Activated CD8-positive, alpha-beta T cell treated with anti-CD3 and anti-CD28 coated beads for 36 hours (primary cell): ENCODE measurements at regions of chr20 and their contacts with region 1.

Region 1: DNA sequence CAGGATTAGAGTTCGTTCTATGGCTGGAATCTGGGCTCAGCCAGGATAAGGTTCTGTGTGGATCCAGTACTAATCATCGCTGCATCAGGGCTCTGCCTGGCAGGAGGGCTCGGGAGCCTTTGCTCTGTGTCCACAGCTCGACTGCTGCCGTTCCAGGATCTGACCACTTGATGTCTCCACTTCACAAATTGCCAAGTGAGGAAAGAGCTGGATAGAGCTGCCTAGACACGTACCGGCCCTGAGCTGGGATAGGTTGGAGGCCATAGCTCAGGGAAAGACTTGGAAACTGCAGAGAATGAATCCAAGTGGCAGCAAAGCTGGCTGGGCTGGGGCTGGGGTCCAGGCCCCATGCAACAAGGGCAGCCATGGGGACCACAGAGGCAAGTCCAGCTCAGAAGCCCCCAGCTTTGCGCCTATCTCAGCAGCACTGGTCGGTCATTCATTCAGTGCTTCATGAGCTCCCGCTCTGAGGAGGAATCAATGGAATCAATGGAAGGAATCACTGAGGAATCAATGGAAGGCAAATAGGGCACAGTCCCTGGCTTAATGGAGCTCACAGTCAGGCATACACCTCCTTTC is 38.0 kb upstream of the TOP1 start:
- DNase-seq: peak; percentile 86
- ATAC-seq: peak; percentile 93
- H3K4me3 Mint-ChIP-seq: no peak overlapping the region
- H3K27ac Mint-ChIP-seq: peak overlapping the region; percentile 85
- H3K4me1 Mint-ChIP-seq: peaks cover 28% of the 10 kb centered on the region
- H3K27me3 Mint-ChIP-seq: no peaks in the 10 kb centered on the region
- CTCF ChIP-seq: peak; percentile 87

Region 2: GRCh38 chr20:40945754-40946450 is 44.7 kb before region 1 on chr20:
- CTCF ChIA-PET with region 1: no interaction called
- POLR2A ChIA-PET with region 1: no interaction called
- intact Hi-C with region 1: no loop called
- DNase-seq: peak; percentile 28
- ATAC-seq: no peak
- H3K4me3 Mint-ChIP-seq: no peak overlapping the region
- H3K27ac Mint-ChIP-seq: no peak overlapping the region
- H3K4me1 Mint-ChIP-seq: no peaks in the 10 kb centered on the region
- H3K27me3 Mint-ChIP-seq: no peaks in the 10 kb centered on the region
- CTCF ChIP-seq: no peak

Region 3: GRCh38 chr20:40962730-40963504 is 27.7 kb before region 1 on chr20:
- CTCF ChIA-PET with region 1: interaction called, 59 read pairs
- POLR2A ChIA-PET with region 1: no interaction called
- intact Hi-C with region 1: no loop called
- DNase-seq: peak; percentile 78
- ATAC-seq: peak; percentile 89
- H3K4me3 Mint-ChIP-seq: no peak overlapping the region
- H3K27ac Mint-ChIP-seq: no peak overlapping the region
- H3K4me1 Mint-ChIP-seq: peaks cover 8% of the 10 kb centered on the region
- H3K27me3 Mint-ChIP-seq: no peaks in the 10 kb centered on the region
- CTCF ChIP-seq: peak; percentile 96

Region 4: GRCh38 chr20:41003143-41003883 is 12.7 kb after region 1 on chr20:
- CTCF ChIA-PET with region 1: interaction called, 27 read pairs
- POLR2A ChIA-PET with region 1: interaction called, 5 read pairs
- intact Hi-C with region 1: no loop called
- DNase-seq: peak; percentile 84
- ATAC-seq: peak; percentile 90
- H3K4me3 Mint-ChIP-seq: peak overlapping the region; percentile 52
- H3K27ac Mint-ChIP-seq: peak overlapping the region; percentile 94
- H3K4me1 Mint-ChIP-seq: peaks cover 27% of the 10 kb centered on the region
- H3K27me3 Mint-ChIP-seq: no peaks in the 10 kb centered on the region
- CTCF ChIP-seq: no peak

Region 5: GRCh38 chr20:41028348-41029148 is 37.9 kb after region 1 on chr20 and contains the start of gene TOP1:
- CTCF ChIA-PET with region 1: interaction called, 25 read pairs
- POLR2A ChIA-PET with region 1: no interaction called
- intact Hi-C with region 1: loop called (anchors 5 kb)
- DNase-seq: peak; percentile 100
- ATAC-seq: peak; percentile 98
- H3K4me3 Mint-ChIP-seq: peak within 1 kb of the TSS; percentile 88
- H3K27ac Mint-ChIP-seq: peak within 1 kb of the TSS; percentile 92
- H3K4me1 Mint-ChIP-seq: peaks cover 42% of the 10 kb centered on the region
- H3K27me3 Mint-ChIP-seq: no peaks in the 10 kb centered on the region
- CTCF ChIP-seq: no peak
- total RNA-seq, gene TOP1: 81.0 to 81.1 TPM

Region 6: DNA sequence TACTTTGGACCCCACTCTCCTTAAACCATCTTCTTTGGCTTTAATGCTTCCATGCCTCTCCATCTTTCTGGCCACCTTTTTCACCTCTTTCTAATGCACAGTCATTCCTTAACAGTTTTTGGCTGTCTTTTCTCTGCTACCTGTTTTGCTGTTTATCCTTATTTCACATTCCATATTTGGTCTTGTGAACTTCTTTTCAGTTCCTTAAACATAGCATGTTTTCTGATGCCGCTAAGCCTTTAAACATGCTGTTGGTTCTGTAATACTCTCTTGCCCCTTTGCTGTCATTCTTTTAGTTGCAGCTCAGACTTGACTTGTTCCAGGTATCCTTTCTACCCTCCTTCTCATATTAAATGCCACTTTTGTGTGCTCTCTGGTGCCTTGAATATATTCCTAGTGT is 73.7 kb after region 1 on chr20:
- CTCF ChIA-PET with region 1: interaction called, 16 read pairs
- POLR2A ChIA-PET with region 1: no interaction called
- intact Hi-C with region 1: no loop called
- DNase-seq: no peak
- ATAC-seq: no peak
- H3K4me3 Mint-ChIP-seq: no peak overlapping the region
- H3K27ac Mint-ChIP-seq: peak overlapping the region; percentile 3
- H3K4me1 Mint-ChIP-seq: peaks cover 44% of the 10 kb centered on the region
- H3K27me3 Mint-ChIP-seq: no peaks in the 10 kb centered on the region
- CTCF ChIP-seq: no peak

Region 7: GRCh38 chr20:41086402-41087338 is 96.0 kb after region 1 on chr20:
- CTCF ChIA-PET with region 1: interaction called, 304 read pairs
- POLR2A ChIA-PET with region 1: interaction called, 3 read pairs
- intact Hi-C with region 1: no loop called
- DNase-seq: no peak
- ATAC-seq: no peak
- H3K4me3 Mint-ChIP-seq: no peak overlapping the region
- H3K27ac Mint-ChIP-seq: peak overlapping the region; percentile 35
- H3K4me1 Mint-ChIP-seq: peaks cover 14% of the 10 kb centered on the region
- H3K27me3 Mint-ChIP-seq: no peaks in the 10 kb centered on the region
- CTCF ChIP-seq: no peak

Region 8: GRCh38 chr20:41136680-41137613 is 146.3 kb after region 1 on chr20 and contains the start of gene PLCG1:
- CTCF ChIA-PET with region 1: interaction called, 21 read pairs
- POLR2A ChIA-PET with region 1: no interaction called
- intact Hi-C with region 1: no loop called
- DNase-seq: peak; percentile 90
- ATAC-seq: peak; percentile 68
- H3K4me3 Mint-ChIP-seq: peak within 1 kb of the TSS; percentile 91
- H3K27ac Mint-ChIP-seq: peak within 1 kb of the TSS; percentile 91
- H3K4me1 Mint-ChIP-seq: peaks cover 64% of the 10 kb centered on the region
- H3K27me3 Mint-ChIP-seq: no peaks in the 10 kb centered on the region
- CTCF ChIP-seq: no peak
- total RNA-seq, gene PLCG1: 259 to 260 TPM